ENCODE measurements at regions of chr4 and their contacts with region 1.

Region 1: DNA sequence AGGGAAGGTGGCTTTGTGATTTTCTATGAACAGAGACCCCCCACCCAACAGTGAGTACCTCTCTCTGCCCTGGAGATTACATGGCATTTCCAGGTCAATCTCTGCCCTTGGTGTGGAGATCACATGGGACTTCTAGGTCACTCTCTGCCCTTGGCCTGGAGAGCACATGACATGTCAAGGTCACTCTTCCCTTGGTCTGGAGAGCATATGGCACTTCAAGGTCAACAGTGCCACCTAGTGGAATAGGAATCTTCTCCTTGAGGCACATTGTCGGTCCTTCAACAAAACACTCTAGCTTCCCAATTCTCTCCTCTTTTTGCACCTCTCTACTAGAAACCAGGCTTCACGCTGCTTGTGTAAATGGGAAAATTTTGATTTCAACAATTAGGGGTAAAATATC is 66.2 kb upstream of the TACR3 start:
- DNase-seq: peak; percentile 36 to 52
- H3K4me3 ChIP-seq: no peak overlapping the region
- H3K4me3 Mint-ChIP-seq: no peak overlapping the region
- H3K27ac Mint-ChIP-seq: no peak overlapping the region
- H3K4me1 ChIP-seq: no peaks in the 10 kb centered on the region
- H3K4me1 Mint-ChIP-seq: no peaks in the 10 kb centered on the region
- H3K27me3 ChIP-seq: no peaks in the 10 kb centered on the region
- H3K27me3 Mint-ChIP-seq: no peaks in the 10 kb centered on the region
- CTCF ChIP-seq: peak; percentile 46 to 59

Region 2: GRCh38 chr4:103634236-103634635 is 151.8 kb before region 1 on chr4:
- CTCF ChIA-PET with region 1: no interaction called
- POLR2A ChIA-PET with region 1: no interaction called
- intact Hi-C with region 1: loop called (anchors 1 kb)
- DNase-seq: no peak
- H3K4me3 ChIP-seq: no peak overlapping the region
- H3K4me3 Mint-ChIP-seq: no peak overlapping the region
- H3K27ac Mint-ChIP-seq: no peak overlapping the region
- H3K4me1 ChIP-seq: no peaks in the 10 kb centered on the region
- H3K4me1 Mint-ChIP-seq: no peaks in the 10 kb centered on the region
- H3K27me3 ChIP-seq: no peaks in the 10 kb centered on the region
- H3K27me3 Mint-ChIP-seq: no peaks in the 10 kb centered on the region
- CTCF ChIP-seq: peak in 1 of 2 experiments; percentile 15